GM23248 (cell line): ENCODE measurements at regions of chr1 and their contacts with region 1.

Region 1: GRCh38 chr1:207965392-207966387 is 54.8 kb upstream of the CD34 start:
- DNase-seq: peak; percentile 33
- H3K4me3 ChIP-seq: no peak overlapping the region
- H3K27ac ChIP-seq: no peak overlapping the region
- H3K4me1 ChIP-seq: peaks cover 23% of the 10 kb centered on the region
- H3K27me3 ChIP-seq: no peaks in the 10 kb centered on the region

Region 2: DNA sequence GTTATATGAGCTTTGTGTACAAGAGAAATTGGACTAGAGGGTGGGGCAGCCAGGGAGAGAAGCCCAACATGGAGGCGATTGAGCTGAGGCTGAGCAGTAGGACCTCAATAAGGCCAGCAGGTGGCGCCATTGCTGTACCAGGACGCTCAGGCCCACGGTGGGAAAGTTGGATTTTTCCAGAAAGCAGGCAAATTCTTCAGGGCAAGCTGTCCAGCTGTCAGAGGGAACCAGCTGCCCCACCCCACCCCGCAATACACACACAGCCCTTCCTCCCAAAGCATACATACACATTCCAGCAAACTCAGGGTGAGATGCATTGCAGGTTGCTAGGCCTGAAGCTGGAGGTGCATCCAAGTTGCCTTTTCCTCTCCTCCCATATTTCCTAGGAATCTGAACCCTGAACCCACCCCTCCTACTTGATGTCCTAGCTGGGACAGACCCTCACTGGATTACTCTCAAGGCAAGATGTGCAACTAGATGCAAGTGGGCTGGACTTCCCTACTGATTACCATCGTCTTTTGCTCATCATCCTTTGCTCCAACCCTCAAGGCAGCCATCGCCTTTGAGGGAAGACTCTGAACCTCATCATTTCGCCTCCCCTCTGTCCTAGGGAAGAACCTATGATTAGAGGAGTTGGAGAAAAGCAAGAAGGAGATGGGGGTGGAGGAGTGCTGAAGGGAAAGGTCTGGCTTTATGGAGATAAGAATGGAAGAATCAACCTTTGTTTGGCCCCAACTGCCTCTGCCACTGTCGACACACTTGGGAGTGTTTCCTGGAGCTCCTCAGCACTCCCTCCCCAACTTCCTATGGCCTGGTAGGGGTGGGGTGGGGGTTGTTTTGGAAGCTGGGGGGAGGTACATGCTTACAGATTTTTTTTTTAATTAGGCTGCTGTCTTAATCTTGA is 80.3 kb before region 1 on chr1:
- in situ Hi-C with region 1: loop called (anchors 5 kb)
- DNase-seq: peak; percentile 87
- H3K4me3 ChIP-seq: no peak overlapping the region
- H3K27ac ChIP-seq: no peak overlapping the region
- H3K4me1 ChIP-seq: peaks cover 27% of the 10 kb centered on the region
- H3K27me3 ChIP-seq: no peaks in the 10 kb centered on the region

Region 3: DNA sequence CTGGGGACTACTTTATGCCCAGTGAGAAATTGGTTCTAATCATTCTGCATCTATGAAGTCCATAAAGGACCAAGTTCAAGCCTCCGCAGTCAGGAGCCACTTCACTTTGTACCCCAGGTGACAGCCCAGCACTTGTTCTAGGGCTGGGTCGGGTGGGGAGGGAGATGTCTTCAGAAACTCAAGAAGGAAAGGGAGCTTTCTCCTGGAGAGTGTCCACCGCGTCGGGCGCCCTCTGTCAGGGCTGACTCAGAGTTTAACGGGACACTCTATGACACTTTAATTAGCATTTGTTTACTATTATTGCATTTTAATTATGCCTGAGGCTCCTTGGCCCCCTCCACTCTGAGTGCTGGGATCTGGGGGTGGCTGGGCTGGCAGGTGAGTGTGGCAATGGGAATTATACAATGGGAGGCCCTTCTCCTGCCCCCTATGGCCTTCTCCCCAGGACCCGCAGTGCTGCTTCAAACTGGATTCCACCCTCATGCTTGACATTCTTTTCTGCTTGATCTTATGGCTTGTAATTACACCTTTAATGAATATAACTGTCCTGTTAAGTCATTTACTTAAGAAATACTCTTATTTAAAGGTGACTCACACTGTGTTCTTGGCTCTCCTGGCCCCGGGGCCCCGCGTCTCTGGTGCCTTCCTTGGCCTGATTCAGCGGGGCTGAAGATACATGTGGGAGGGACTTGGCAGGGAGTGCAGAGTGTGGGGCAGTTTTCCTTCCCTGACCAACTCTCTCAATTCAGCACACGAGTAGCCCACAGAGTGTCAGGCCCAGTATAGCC is 141.9 kb after region 1 on chr1:
- in situ Hi-C with region 1: no loop called
- DNase-seq: peak; percentile 96
- H3K4me3 ChIP-seq: peak overlapping the region; percentile 10; the same call in 1 of the 2 replicates
- H3K27ac ChIP-seq: peak overlapping the region; percentile 51
- H3K4me1 ChIP-seq: peaks cover 19% of the 10 kb centered on the region
- H3K27me3 ChIP-seq: no peaks in the 10 kb centered on the region